Tibial artery (tissue), 4 donors: ENCODE measurements at regions of chr9 and their contacts with region 1.

Region 1: DNA sequence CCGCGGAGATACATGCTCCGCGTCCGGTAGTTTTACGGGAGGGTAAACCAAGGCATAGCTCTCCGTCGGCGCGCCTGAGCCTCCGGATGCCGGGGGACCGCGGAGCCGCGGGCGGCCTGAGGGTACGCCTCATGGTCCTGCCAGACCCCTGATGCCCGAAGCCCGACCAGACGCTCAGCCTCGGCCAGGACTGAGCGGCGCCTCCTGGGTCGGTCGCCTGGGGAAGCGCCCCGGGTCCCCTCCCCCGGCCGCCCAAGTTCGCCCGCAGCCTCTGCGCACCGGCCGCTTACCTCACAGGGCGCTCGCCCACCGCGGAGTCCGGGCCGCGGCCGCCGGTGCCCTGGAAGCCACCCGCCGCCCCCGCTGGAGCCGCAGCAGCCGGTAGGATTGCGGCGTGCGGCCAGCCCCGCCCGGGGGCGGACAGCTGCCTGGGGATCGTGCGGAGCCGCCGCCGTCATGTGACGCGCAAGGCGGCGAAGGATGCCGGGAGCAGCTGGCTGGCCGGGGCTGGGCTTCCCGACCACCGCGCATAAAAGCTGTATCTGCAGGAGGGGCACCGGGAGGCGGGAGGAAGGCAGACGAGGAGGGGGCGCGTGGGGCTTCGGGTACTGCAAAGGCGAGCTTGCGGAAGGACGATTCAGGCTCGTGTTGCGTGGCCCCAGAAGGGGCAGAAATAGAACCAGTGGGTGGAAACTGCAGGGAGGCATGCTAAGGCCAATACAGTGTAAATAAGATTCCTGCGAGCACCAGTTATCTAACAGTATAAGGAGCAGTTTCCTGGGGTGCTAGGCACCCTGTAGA is at the start of gene FBXO10:
- DNase-seq: peak; percentile 54 to 82
- H3K4me3 ChIP-seq: peak within 1 kb of the TSS; percentile 80 to 81
- H3K27ac ChIP-seq: peak within 1 kb of the TSS; percentile 78 to 89
- H3K4me1 ChIP-seq: peaks cover 0 to 20% (median 14%) of the 10 kb centered on the region in 4 donors
- H3K27me3 ChIP-seq: no peaks in the 10 kb centered on the region
- CTCF ChIP-seq: no peak

Region 2: GRCh38 chr9:37422289-37423104 is 153.6 kb before region 1 on chr9 and contains the start of gene GRHPR:
- intact Hi-C with region 1: loop called (anchors 10 kb)
- DNase-seq: peak; percentile 84 to 92
- H3K4me3 ChIP-seq: peak within 1 kb of the TSS; percentile 66 to 94
- H3K27ac ChIP-seq: peak within 1 kb of the TSS; percentile 75 to 86
- H3K4me1 ChIP-seq: peaks cover 0 to 27% (median 25%) of the 10 kb centered on the region in 4 donors
- H3K27me3 ChIP-seq: no peaks in the 10 kb centered on the region
- CTCF ChIP-seq: no peak